ENCODE measurements at regions of chrX and their contacts with region 1.

Region 1: DNA sequence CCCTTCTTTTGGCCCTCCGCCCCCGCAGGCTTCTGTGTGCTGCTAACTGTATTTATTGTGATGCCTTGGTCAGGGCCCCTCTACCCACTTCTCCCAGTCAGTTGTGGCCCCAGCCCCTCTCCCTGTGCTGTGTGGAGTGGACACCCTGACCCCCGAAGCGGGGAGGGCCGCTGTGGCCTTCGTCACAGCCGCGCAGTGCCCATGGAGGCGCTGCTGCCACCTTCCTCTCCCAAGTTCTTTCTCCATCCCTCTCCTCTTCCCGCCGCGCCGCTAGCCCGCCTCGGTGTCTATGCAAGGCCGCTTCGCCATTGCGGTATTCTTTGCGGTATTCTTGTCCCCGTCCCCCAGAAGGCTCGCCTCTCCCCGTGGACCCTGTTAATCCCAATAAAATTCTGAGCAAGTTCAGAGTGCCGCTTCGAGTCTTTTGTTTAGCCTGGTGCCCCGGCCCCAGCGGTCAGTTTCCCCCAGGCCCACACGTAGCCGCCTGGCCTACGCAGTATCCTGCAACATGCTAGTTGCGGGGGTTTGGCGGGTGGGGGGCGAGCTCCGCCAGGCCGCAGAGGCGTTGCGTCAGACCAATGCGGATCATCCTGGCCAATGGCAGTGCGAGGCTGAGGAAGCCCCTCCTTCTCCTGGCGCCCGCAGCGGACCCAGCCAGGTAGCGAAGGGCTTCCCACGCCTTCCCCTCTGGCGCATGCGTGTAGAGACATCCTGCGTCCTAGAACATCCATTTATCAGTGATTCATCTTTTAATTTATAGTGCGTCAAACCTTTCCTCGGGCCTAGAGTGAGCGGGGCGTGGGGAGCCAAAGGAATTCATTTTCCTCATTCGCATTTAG is 5.6 kb upstream of the KANTR start:
- DNase-seq: peak; percentile 52
- ATAC-seq: peak; percentile 74
- H3K4me3 Mint-ChIP-seq: peak overlapping the region; percentile 89
- H3K27ac Mint-ChIP-seq: peak overlapping the region; percentile 92
- H3K4me1 Mint-ChIP-seq: peaks cover 39% of the 10 kb centered on the region
- H3K27me3 Mint-ChIP-seq: no peaks in the 10 kb centered on the region
- CTCF ChIP-seq: no peak

Region 2: DNA sequence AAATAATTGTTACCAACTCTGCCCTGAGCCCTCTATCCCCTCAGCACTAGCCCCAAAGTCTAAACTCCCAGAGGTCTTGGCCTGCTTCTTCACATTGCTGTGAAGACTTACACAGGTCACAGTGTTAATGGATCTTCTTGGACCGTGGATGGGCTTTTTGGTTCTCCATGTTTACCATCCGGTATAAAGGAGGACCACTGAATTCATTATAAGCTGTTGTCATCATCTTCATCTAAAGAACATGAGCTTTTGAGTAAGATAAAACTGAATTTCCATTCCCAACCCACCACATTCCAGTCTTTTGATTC is 1600.4 kb before region 1 on chrX:
- CTCF ChIA-PET with region 1: no interaction called
- POLR2A ChIA-PET with region 1: no interaction called
- intact Hi-C with region 1: loop called (anchors 5 kb)
- DNase-seq: no peak
- ATAC-seq: no peak
- H3K4me3 Mint-ChIP-seq: no peak overlapping the region
- H3K27ac Mint-ChIP-seq: no peak overlapping the region
- H3K4me1 Mint-ChIP-seq: no peaks in the 10 kb centered on the region
- H3K27me3 Mint-ChIP-seq: no peaks in the 10 kb centered on the region
- CTCF ChIP-seq: no peak

Region 3: DNA sequence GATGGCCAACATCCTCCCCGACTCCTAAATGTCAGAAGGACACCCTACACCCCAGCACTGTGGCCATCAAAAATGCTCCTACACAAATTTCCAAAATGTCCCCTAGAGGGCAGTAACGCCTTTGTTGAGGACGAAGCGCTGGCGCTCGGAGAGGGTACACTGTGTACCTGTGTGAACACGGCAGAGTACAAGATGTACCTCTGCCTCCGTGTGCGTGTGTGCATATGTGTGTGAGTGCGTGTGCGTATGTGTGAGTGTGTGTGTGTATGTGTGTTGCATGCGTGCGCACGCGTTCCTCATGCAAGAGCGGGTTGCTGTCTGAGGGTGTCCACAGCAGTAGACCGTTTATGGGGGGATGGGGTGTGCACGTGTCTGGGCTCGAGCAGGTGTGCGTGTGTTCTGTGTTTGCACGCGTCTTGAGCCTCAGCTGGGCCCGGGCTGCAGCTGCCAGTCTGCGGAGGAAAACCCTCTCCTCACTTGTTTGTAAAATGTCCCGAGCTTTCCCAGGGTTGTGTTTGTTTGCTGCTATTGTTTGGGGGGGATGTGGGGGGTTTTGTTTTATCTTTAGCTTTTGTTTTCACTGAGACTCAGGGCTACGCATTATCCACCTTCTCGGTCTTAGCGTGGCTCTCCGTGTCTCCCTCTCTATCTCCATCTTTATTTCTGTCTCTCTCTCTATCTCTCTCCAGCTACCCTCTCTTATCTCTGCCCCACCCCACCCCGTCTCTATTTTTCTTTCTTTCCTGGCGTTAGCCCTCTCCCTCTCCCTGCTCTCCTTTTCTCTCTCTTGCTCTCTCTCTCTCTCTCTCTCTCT is 16.5 kb before region 1 on chrX:
- CTCF ChIA-PET with region 1: interaction called, 17 read pairs
- POLR2A ChIA-PET with region 1: interaction called, 3 read pairs
- intact Hi-C with region 1: loop called (anchors 1 kb)
- DNase-seq: peak; percentile 32
- ATAC-seq: peak; percentile 84
- H3K4me3 Mint-ChIP-seq: peak overlapping the region; percentile 85
- H3K27ac Mint-ChIP-seq: peak overlapping the region; percentile 90
- H3K4me1 Mint-ChIP-seq: peaks cover 16% of the 10 kb centered on the region
- H3K27me3 Mint-ChIP-seq: no peaks in the 10 kb centered on the region
- CTCF ChIP-seq: no peak